ENCODE measurements at regions of chr11 and their contacts with region 1.

Region 1: DNA sequence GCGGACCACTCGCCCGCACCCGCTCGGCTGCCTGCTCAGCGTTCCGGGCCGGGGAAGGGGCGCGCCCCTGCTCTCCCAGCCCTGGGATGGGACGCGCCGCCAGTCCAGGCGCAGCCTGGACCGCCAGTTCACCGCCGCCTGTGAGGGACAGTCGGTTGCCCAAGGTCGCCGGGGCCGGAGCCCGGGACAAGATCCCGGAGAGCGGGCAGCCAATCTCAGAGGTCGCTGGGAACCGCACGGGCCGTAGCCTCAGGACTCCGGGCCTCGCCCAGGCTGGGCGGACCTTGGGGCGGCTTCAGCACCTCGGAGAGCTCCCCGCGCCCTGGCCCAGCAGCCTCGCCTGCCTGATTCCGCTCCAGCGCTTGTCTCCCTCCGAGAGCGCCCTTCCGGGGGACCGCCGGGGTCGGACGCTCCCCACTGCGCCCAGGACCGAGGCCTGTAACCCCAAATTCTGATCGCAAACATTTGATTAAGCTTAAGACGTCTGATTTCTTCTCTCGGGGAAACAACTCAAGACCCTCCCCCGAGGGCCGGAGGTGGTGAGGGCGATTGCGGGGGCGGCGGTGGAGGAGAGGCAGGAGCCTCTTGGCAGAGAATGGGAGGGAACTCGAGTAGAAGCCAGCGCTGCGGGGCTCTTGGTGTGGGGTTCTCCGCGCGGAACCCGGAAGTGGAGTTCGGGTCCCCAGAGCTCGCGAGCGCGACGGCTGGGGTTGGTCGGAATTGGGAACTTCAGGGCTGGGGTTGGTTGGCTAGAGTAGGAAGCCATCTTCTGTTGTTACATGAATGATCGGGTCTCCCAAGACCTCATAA is 1.1 kb upstream of the CHRM4 start:
- DNase-seq: peak; percentile 88 to 95 (median 95)
- ATAC-seq: peak; percentile 86 to 90
- H3K4me3 ChIP-seq: peak overlapping the region; percentile 53
- H3K27ac ChIP-seq: no peak overlapping the region
- H3K4me1 ChIP-seq: no peaks in the 10 kb centered on the region
- H3K27me3 ChIP-seq: no peaks in the 10 kb centered on the region

Region 2: GRCh38 chr11:46529928-46530574 is 137.4 kb after region 1 on chr11:
- intact Hi-C with region 1: loop called (anchors 5 kb)
- DNase-seq: no peak
- ATAC-seq: peak in 1 of 2 donors; percentile 32
- H3K4me3 ChIP-seq: no peak overlapping the region
- H3K27ac ChIP-seq: no peak overlapping the region
- H3K4me1 ChIP-seq: peaks cover 2% of the 10 kb centered on the region
- H3K27me3 ChIP-seq: no peaks in the 10 kb centered on the region

Region 3: GRCh38 chr11:46537537-46538295 is 145.1 kb after region 1 on chr11:
- intact Hi-C with region 1: loop called (anchors 5 kb)
- DNase-seq: peak; percentile 54 to 70 (median 67)
- ATAC-seq: peak; percentile 74 to 79
- H3K4me3 ChIP-seq: no peak overlapping the region
- H3K27ac ChIP-seq: no peak overlapping the region
- H3K4me1 ChIP-seq: no peaks in the 10 kb centered on the region
- H3K27me3 ChIP-seq: no peaks in the 10 kb centered on the region

Region 4: GRCh38 chr11:46616998-46617675 is 224.5 kb after region 1 on chr11 and contains the starts of genes ATG13 and HARBI1:
- intact Hi-C with region 1: loop called in 1 of 4 experiments (anchors 10 kb)
- DNase-seq: peak; percentile 94 to 96 (median 96)
- ATAC-seq: peak; percentile 99 to 100
- H3K4me3 ChIP-seq: peak within 1 kb of the TSS; percentile 98
- H3K27ac ChIP-seq: peak within 1 kb of the TSS; percentile 97
- H3K4me1 ChIP-seq: peaks cover 2% of the 10 kb centered on the region
- H3K27me3 ChIP-seq: no peaks in the 10 kb centered on the region
- total RNA-seq, gene ATG13: 48.5 to 66.2 (median 59.1) TPM
- total RNA-seq, gene HARBI1: 3.1 to 4.1 (median 3.7) TPM

Region 5: DNA sequence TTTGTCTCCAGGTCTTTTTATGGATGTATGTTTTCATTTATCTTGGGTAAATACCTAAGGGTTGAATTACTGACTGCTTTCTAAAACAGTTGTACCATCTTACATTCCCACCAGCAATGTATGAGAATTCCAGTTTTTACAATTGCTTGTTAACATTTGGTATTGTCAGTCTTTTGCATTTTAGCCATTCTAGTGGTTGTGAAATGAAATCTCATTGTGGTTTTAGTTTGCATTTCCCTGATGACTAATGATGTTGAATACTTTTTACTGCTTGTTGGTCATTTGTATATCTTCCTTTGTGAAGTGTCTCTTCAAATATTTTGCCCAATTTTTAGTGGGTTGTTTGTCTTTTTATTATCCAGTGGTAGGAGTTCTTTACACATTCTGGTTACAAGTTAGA is 691.3 kb after region 1 on chr11:
- intact Hi-C with region 1: no loop called
- DNase-seq: no peak
- ATAC-seq: no peak
- H3K4me3 ChIP-seq: no peak overlapping the region
- H3K27ac ChIP-seq: no peak overlapping the region
- H3K4me1 ChIP-seq: no peaks in the 10 kb centered on the region
- H3K27me3 ChIP-seq: no peaks in the 10 kb centered on the region

Measured in right cardiac atrium (tissue), 5 donors.